Activated CD8-positive, alpha-beta memory T cell treated with anti-CD3 and anti-CD28 coated beads, Interleukin-2, amount 10 ng/mL, durations not matched to agents 7 days and 5 days (primary cell): ENCODE measurements at regions of chr16 and their contacts with region 1.

Region 1: GRCh38 chr16:29700253-29700987 is 21.4 kb downstream of the QPRT start:
- DNase-seq: peak; percentile 83
- ATAC-seq: peak; percentile 61
- H3K4me3 Mint-ChIP-seq: peak overlapping the region; percentile 36
- H3K27ac Mint-ChIP-seq: peak overlapping the region; percentile 76
- H3K4me1 Mint-ChIP-seq: peaks cover 31% of the 10 kb centered on the region
- H3K27me3 Mint-ChIP-seq: peaks cover 2% of the 10 kb centered on the region

Region 2: DNA sequence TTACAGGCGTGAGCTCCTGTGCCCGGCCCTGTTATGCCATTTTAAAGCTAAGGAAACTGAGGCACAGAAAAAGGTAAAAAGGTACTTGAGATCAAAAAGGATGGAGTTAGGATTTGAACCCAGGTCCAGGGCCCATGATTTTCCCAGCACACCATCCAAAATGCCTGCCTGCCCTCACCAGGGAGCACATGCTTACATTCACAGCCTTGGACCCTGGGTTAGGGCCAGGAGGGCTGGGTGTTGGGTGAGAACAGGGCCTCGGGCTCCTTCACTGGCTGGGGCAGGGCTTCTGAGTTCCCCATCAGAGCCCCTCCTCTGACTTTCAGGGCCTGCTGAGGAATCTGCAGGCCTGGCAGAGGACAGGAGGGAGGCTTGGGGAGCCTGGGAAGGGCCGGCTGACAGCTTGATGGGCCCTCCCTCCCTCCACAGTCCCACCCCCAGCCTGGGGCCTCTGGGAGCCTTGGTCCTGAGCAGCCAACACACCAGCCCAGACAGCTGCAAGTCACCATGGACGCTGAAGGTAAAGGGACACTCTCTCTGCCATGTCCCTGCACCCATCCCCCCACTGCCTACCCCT is 21.6 kb before region 1 on chr16 and contains the start of gene QPRT:
- CTCF ChIA-PET with region 1: interaction called, 12 read pairs
- DNase-seq: no peak
- ATAC-seq: peak; percentile 37
- H3K4me3 Mint-ChIP-seq: peak within 1 kb of the TSS; percentile 61
- H3K27ac Mint-ChIP-seq: peak within 1 kb of the TSS; percentile 77
- H3K4me1 Mint-ChIP-seq: peaks cover 30% of the 10 kb centered on the region
- H3K27me3 Mint-ChIP-seq: no peaks in the 10 kb centered on the region
- total RNA-seq, gene QPRT: 13.3 to 15.7 TPM

Region 3: GRCh38 chr16:29720699-29721098 is 20.3 kb after region 1 on chr16:
- CTCF ChIA-PET with region 1: interaction called, 75 read pairs
- DNase-seq: no peak
- ATAC-seq: no peak
- H3K4me3 Mint-ChIP-seq: no peak overlapping the region
- H3K27ac Mint-ChIP-seq: no peak overlapping the region
- H3K4me1 Mint-ChIP-seq: peaks cover 8% of the 10 kb centered on the region
- H3K27me3 Mint-ChIP-seq: no peaks in the 10 kb centered on the region

Region 4: GRCh38 chr16:29790183-29790952 is 89.9 kb after region 1 on chr16 and contains the start of gene KIF22:
- CTCF ChIA-PET with region 1: interaction called, 104 read pairs
- DNase-seq: peak; percentile 100
- ATAC-seq: peak; percentile 97
- H3K4me3 Mint-ChIP-seq: peak within 1 kb of the TSS; percentile 96
- H3K27ac Mint-ChIP-seq: peak within 1 kb of the TSS; percentile 96
- H3K4me1 Mint-ChIP-seq: peaks cover 45% of the 10 kb centered on the region
- H3K27me3 Mint-ChIP-seq: no peaks in the 10 kb centered on the region
- total RNA-seq, gene KIF22: 205 to 266 TPM

Region 5: DNA sequence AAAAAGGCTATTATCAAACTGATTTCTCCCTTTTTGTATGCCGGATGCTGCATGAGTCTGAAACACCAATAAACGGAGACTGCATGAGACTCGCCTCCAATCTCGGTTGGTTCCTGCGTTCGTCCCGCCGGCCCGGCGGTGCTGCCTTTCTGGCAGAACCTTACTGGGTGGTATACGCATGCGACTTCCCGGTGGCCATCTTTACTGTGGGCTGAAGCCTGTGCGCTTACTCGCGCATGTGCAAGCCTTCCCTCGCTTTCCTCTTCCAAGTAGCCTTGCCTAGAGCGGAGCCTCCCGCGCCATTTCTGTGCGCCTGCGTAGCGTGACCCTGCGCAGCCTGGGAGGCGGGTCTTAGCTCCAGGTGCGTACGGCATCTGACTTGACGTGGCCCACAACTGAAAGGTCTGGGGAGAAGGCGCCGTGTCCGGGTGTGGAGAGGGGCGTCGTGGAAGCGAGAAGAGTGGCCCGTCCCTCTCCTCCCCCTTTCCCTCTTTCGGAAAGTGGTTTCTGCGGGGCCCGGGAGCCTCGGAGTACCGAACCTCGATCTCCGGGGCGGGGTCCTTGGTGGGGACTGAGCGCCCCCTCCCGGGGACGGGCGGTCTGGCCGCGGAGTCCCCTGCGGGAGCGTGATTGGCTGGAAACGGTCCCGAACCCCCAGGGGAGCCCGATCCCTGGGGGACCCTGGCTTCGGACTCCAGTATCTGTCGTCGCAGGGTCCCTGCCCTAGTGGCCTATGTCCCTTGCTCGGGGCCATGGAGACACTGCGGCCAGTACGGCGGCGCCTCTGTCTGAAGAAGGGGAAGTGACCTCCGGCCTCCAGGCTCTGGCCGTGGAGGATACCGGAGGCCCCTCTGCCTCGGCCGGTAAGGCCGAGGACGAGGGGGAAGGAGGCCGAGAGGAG is 115.6 kb after region 1 on chr16 and contains the start of gene PAGR1:
- CTCF ChIA-PET with region 1: interaction called, 100 read pairs
- DNase-seq: peak; percentile 99
- ATAC-seq: peak; percentile 79
- H3K4me3 Mint-ChIP-seq: peak within 1 kb of the TSS; percentile 99
- H3K27ac Mint-ChIP-seq: peak within 1 kb of the TSS; percentile 88
- H3K4me1 Mint-ChIP-seq: peaks cover 65% of the 10 kb centered on the region
- H3K27me3 Mint-ChIP-seq: peaks cover 12% of the 10 kb centered on the region
- total RNA-seq, gene PAGR1: 34.3 to 35.2 TPM

Region 6: DNA sequence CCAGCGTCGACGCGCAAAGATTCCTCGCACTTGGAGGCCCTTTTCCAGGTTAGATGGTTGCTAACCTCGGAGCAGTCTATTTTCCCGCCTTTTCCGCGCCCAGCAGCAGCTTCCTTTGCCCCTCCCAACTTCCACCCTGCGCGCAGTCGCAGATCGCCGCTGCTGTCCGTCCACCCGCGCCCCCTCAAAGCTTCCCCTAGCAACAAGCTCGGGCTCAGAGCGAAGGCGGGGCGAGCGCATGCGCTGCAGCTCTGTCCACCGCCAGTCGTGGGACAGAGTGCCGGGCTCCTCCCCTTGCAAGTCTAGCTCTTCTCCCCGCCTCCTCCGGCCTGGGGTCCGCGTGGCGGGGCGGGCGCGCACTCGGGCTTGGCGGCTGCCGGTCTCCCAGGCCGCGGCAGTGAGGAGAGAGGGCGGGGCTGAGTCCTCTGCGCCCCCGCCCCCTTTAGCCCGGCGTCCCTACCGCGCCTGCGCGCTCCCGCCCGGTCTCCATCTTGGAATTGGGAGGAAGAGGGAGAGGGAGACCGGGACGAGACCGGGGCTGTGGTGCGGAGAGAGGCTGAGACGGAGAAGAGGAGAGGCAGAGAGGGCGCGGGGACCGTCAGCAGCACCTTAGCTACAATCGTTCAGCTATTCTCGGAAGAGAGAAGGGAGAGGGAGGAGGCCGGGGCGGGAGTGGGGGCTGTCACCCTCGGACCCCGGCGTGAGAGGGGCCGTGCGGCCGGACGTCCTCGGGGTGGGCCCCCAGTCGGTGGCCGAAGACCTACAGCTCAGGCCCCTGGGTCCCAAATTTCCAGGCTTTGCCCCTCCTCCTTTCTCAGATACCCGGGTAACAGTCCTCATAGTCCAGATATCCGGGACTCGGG is 273.2 kb after region 1 on chr16 and contains the start of gene TAOK2:
- CTCF ChIA-PET with region 1: interaction called, 10 read pairs
- DNase-seq: peak; percentile 99
- ATAC-seq: peak; percentile 99
- H3K4me3 Mint-ChIP-seq: peak within 1 kb of the TSS; percentile 81
- H3K27ac Mint-ChIP-seq: peak within 1 kb of the TSS; percentile 95
- H3K4me1 Mint-ChIP-seq: peaks cover 30% of the 10 kb centered on the region
- H3K27me3 Mint-ChIP-seq: no peaks in the 10 kb centered on the region
- total RNA-seq, gene TAOK2: 51.1 to 55.3 TPM

Region 7: GRCh38 chr16:30032083-30032819 is 331.8 kb after region 1 on chr16:
- CTCF ChIA-PET with region 1: interaction called, 40 read pairs
- DNase-seq: peak; percentile 80
- ATAC-seq: peak; percentile 70
- H3K4me3 Mint-ChIP-seq: no peak overlapping the region
- H3K27ac Mint-ChIP-seq: no peak overlapping the region
- H3K4me1 Mint-ChIP-seq: peaks cover 21% of the 10 kb centered on the region
- H3K27me3 Mint-ChIP-seq: peaks cover 64% of the 10 kb centered on the region